HEK293T (cell line): ENCODE measurements at regions of chr11 and their contacts with region 1.

Region 1: GRCh38 chr11:62591448-62592145 is at the start of gene TUT1:
- DNase-seq: peak; percentile 87

Region 2: DNA sequence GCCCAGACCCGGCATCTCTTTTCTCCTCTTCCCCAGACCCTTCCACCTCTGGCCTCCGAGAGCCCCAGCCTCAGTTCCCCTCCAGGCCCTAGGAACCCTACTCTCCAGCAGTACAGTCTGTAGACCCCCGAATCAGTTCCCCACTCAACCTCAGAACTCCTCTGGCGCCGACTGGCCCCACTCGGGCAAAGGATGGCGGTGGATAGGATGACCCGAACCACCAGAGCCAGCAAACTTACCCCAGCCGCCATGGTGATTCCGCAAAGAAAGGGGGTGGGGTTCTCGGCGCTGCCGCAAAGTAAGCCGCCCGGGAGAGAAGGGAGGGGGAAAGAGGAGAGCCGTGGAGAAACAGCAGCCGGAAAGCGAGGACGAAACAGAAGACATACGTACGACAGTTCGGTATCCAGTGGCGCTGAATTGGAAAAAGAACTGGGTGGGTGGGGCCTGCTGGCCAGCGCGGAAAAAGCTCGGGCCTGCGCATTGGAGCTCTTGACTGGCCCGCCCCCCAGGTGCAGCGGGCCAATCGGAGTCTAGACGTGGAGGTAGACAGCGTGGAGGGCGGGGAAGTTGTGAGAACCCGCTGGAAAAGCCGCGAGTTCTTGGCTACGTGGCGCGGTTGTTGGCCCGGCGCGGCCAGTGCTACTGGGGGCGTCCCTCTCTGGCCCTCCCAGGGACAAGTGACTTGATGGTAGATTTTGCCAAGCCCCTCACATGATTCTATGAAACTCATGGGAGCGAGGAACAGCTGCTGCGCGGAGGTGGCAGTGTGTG is 17.8 kb before region 1 on chr11 and contains the start of gene EEF1G:
- CTCF ChIA-PET with region 1: interaction called, 3 read pairs
- POLR2A ChIA-PET with region 1: interaction called, 168 read pairs
- DNase-seq: peak; percentile 98

Region 3: DNA sequence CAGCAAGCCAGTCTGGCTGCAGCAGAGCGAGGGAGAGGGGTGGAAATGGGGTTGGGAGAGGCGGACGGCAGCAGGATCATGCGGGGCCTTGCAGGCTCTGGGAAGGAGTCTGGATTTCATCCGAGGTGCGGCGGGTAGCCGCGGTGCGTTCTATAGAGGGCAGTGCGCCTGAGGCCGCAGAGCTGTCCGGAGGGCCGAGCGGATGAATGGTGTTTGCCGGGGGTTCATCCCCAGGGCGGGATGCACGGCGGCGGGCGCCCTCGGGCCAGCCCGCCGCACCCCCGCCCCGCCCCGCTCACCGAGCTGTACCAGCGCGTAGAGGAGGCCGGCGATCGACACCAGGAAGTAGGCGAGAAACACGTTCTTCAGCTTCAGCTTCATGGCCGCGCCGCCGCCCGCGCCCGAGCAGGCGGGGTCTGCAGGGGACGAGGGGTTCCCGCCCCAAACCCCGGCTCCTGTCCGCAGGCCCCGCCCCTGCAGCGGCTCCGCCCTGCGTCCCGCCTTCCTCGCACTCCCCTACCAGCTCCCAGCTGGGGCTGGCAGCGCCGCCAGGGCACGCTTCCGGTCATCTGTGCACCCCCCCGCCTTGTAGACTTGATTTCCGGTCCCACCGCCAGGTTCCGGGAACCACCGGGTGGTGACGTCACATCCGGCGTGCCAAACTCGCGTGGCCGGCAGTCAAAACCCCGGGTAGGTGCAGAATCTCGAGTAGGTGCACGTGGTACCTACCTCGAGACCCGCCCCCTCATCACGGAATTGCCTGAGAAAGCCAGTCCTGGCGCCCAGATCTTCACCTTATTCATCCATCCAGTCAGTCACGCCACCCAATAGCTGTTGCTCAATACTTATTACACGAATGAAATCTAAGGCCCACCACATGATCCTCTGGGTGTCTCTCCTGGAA is 30.2 kb after region 1 on chr11 and contains the start of gene B3GAT3:
- CTCF ChIA-PET with region 1: interaction called, 3 read pairs
- POLR2A ChIA-PET with region 1: interaction called, 61 read pairs
- DNase-seq: peak; percentile 98

Region 4: DNA sequence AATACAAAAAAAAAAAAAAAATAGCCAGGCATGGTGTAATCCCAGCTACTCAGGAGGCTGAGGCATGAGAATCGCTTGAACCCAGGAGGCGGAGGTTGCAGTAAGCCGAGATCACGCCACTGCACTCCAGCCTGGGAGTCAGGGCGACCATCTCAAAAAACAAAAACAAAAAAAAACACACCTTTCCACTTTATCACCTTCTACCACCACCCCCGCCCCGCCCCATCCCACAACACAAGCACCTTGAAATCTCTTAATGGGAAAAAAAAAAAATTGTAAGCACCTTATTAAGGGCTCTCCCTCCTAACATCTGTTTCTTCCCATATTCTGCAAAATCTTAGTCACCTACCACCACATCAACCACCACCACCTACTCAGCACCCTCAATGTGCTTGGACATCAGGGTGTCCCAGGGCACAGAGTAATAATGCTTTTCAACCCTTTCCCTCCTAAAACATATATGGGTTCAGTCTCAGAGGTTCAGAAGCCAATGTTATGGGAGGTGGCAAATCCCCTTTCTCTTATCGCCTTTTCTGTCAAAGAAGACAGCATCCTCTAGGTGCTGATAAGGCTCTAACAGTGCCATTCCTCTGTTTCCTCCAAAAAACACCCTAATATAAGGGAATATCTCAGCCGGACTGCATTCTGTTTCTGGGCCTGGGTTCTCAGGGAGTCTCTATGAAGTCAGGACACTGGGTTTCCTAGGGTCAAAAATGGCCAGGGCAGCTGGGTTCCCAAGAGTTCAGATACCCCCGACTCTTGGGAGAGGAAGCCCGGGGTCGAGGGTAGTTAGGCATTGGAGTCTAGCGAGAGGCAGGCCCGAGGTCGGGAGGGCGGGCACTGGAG is 60.8 kb after region 1 on chr11:
- CTCF ChIA-PET with region 1: no interaction called
- POLR2A ChIA-PET with region 1: interaction called, 20 read pairs
- DNase-seq: no peak

Region 5: GRCh38 chr11:62671575-62672389 is 80.2 kb after region 1 on chr11 and contains the starts of genes LBHD1 and UQCC3:
- CTCF ChIA-PET with region 1: interaction called, 5 read pairs
- POLR2A ChIA-PET with region 1: interaction called, 34 read pairs
- DNase-seq: peak; percentile 62

Region 6: DNA sequence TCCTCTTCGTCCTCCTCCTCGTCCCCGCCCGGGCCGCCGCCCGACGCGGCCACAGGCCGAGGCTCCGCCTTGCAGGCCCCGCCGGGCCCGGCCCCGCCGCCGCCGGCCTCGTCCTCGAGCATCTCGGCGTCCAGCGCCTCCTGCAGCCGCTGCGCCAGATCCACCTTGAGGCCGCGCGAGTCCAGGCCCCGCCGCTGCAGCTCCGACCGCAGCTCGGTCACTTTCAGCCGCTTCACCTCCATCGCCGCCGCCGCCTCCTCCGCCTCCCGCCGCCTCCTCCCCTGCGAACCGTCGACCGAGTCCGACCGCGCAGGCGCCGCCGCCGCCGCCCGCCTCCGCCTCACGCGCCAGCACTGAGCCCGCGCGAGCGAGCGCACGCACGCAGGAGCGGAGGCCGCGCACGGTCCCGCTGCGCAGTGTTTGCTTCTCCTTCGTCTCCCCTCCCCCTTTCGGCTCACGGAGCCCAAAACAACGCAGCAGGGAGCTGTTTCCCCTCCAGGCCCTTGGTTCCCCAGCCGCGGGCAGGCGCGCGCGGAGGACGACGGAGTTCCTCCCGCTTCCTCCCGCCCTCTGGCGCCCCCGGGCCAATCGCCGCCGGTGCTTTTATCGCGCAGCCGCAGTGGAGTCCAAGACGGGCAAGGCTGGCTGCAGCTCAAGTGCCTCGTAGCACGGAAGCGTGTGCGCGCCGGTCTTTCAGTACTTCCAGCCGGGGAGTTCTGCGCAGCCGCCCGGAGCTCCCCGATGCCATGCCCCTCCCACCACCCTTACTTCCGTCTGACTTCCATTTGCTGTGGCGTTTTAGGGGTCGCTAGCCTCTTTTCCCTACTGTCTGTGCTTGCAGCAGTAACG is 135.5 kb after region 1 on chr11 and contains the start of gene HNRNPUL2:
- CTCF ChIA-PET with region 1: no interaction called
- POLR2A ChIA-PET with region 1: interaction called, 25 read pairs
- DNase-seq: peak; percentile 92